IMR-90 (cell line): ENCODE measurements at regions of chr6 and their contacts with region 1.

Region 1: DNA sequence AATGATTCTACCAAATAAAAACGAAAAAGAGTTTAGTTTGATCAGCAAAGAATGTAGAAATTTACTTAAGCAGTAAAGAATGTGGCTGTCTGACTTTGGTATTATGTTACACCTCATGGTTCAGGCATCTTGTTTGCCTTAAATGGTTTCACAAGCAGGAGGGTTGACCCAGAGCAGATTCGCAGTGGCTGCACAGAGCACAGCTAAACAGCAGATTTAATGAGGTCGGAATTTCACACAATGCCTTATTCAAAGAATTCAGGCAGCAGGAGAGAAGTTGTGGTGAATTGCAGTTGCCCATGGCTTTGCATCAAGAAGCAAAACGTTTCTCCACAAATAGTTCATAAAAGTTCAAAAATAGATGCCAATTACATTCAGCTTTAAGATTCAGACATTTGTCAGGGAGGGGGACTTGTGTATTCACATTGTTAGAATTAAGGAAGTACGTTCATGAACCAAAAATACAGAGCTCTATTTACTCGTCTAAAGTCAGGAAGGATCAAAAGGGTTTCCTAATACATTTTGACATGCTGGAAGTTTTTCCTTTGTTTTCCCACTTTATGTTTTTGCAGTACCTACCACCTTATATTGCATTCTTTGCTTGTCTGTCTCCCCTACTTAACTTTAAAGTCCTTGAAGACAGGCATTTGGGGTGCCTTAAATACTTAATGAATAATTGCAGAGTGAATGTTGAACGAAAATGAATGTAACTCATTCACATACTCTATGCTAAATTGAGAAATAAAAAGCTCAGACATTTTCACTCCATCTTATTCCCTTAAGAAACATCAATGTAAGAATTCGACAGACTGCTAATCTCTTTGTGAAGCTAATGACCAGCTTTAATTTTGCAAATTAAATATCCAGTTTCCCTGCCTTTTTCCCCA is 1163.6 kb upstream of the CITED2 start:
- DNase-seq: peak; percentile 98
- ATAC-seq: peak; percentile 98
- H3K4me3 ChIP-seq: no peak overlapping the region
- H3K27ac ChIP-seq: peak overlapping the region; percentile 98
- H3K4me1 ChIP-seq: peaks cover 4% of the 10 kb centered on the region
- H3K27me3 ChIP-seq: no peaks in the 10 kb centered on the region
- CTCF ChIP-seq: no peak
- POLR2A ChIP-seq: peak; percentile 31; the same call in 1 of the 2 replicates
- RAD21 ChIP-seq: peak; percentile 17; the same call in 1 of the 2 replicates

Region 2: DNA sequence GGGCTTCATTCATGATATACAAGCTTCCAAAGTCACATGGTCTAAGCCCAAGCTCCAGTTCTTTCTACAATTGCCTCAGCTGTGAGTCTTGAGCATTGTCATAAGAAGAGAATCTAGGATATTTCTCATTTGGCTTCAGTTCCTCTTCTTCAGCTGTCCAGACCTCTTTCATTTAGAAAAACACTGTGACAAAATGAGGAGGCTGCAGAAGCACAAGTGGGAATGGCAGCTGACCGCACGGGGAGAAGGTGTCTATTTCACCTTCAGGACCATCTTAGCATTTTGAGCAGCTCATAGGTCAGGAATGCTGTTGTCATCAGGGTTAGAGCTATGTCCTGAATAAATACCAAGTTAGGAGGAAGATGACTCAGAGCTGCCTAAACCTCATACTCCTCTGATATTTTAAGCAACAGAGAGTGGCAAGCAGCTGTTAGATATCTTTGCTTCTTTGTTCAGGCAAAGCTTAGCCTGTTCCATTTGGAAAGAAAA is 773.5 kb before region 1 on chr6:
- CTCF ChIA-PET with region 1: no interaction called
- POLR2A ChIA-PET with region 1: no interaction called
- dilution Hi-C with region 1: no loop called
- in situ Hi-C with region 1: no loop called
- intact Hi-C with region 1: loop called (anchors 5 kb)
- DNase-seq: peak; percentile 99
- ATAC-seq: peak; percentile 94
- H3K4me3 ChIP-seq: no peak overlapping the region
- H3K27ac ChIP-seq: peak overlapping the region; percentile 29; the same call in 1 of the 2 replicates
- H3K4me1 ChIP-seq: peaks cover 13% of the 10 kb centered on the region
- H3K27me3 ChIP-seq: no peaks in the 10 kb centered on the region
- CTCF ChIP-seq: no peak
- POLR2A ChIP-seq: no peak
- RAD21 ChIP-seq: peak; percentile 17; the same call in 1 of the 2 replicates

Region 3: DNA sequence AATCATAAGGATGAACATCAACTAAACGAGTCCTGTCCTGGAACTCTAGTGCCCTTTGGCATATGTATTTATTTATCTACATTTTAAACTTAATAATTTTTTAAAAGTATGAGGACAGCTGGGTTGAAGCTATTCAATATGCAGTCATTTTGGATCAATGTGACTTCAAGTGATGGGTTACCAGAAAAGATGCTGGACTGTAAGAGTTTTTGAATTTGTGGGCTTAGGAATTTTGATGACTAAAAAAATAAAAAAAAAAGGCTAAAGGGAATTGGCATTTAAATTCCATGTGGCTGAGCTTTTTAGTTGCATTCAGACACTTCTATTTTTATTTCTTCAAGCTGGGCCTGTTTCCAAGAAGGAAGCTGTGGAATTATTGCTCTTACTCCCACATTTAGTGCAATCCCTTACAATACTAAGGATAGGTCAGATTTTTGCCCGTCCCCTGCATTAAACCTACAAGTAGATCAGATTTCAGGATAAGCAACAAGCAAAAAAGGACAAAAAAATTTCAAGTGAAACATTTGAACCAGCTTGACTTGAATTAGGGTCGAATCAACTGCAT is 459.4 kb before region 1 on chr6:
- CTCF ChIA-PET with region 1: no interaction called
- POLR2A ChIA-PET with region 1: interaction called, 3 read pairs
- dilution Hi-C with region 1: no loop called
- in situ Hi-C with region 1: no loop called
- intact Hi-C with region 1: loop called (anchors 5 kb)
- DNase-seq: peak; percentile 92
- ATAC-seq: peak; percentile 86
- H3K4me3 ChIP-seq: no peak overlapping the region
- H3K27ac ChIP-seq: peak overlapping the region; percentile 55; the same call in 1 of the 2 replicates
- H3K4me1 ChIP-seq: peaks cover 11% of the 10 kb centered on the region
- H3K27me3 ChIP-seq: no peaks in the 10 kb centered on the region
- CTCF ChIP-seq: no peak
- POLR2A ChIP-seq: no peak
- RAD21 ChIP-seq: no peak

Region 4: DNA sequence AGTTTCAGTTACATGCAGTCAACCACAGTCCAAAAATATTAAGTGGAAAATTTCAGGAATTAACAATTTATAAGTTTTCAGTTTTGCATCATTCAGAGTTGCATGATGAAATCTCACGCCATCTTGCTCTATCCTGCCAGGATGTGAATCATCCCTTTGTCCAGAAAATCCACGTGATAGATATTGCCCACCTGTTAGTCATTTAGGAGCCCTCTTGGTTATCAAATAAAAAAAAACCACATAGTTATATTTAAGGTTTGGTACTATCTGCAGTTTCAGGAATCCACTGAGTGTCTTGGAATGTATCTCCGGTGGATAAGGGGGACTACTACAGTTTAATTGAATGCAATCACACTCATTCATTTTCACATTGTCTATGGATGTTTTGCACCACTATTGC is 85.4 kb after region 1 on chr6:
- CTCF ChIA-PET with region 1: no interaction called
- POLR2A ChIA-PET with region 1: no interaction called
- dilution Hi-C with region 1: no loop called
- in situ Hi-C with region 1: no loop called
- intact Hi-C with region 1: loop called (anchors 5 kb)
- DNase-seq: peak; percentile 93
- ATAC-seq: 0 out of 2 replicates have a peak, but pooled peaks have one; percentile 13
- H3K4me3 ChIP-seq: no peak overlapping the region
- H3K27ac ChIP-seq: peak overlapping the region; percentile 67; the same call in 1 of the 2 replicates
- H3K4me1 ChIP-seq: peaks cover 9% of the 10 kb centered on the region; the same call in 1 of the 2 replicates
- H3K27me3 ChIP-seq: no peaks in the 10 kb centered on the region
- CTCF ChIP-seq: no peak
- POLR2A ChIP-seq: no peak
- RAD21 ChIP-seq: no peak

Region 5: GRCh38 chr6:141562851-141563763 is 1025.0 kb after region 1 on chr6:
- CTCF ChIA-PET with region 1: no interaction called
- POLR2A ChIA-PET with region 1: interaction called, 3 read pairs
- dilution Hi-C with region 1: no loop called
- in situ Hi-C with region 1: no loop called
- intact Hi-C with region 1: loop called (anchors 2 kb)
- DNase-seq: peak; percentile 91
- ATAC-seq: peak; percentile 91
- H3K4me3 ChIP-seq: no peak overlapping the region
- H3K27ac ChIP-seq: no peak overlapping the region; the same call in 1 of the 2 replicates
- H3K4me1 ChIP-seq: peaks cover 3% of the 10 kb centered on the region
- H3K27me3 ChIP-seq: no peaks in the 10 kb centered on the region
- CTCF ChIP-seq: peak; percentile 92
- POLR2A ChIP-seq: peak; percentile 55; the same call in 1 of the 2 replicates
- RAD21 ChIP-seq: peak; percentile 97